PC-3 (cell line): ENCODE measurements at regions of chr2 and their contacts with region 1.

Region 1: GRCh38 chr2:170815746-170816503 is 762 bp upstream of the GAD1 start:
- DNase-seq: peak; percentile 82
- ATAC-seq: peak; percentile 47
- H3K4me3 ChIP-seq: peak overlapping the region; percentile 97
- H3K27ac ChIP-seq: no peak overlapping the region
- H3K4me1 ChIP-seq: peaks cover 13% of the 10 kb centered on the region; the same call in 1 of the 2 replicates
- H3K27me3 ChIP-seq: no peaks in the 10 kb centered on the region
- CTCF ChIP-seq: peak; percentile 89

Region 2: GRCh38 chr2:170369894-170370293 is 446.0 kb before region 1 on chr2:
- CTCF ChIA-PET with region 1: no interaction called
- POLR2A ChIA-PET with region 1: no interaction called
- intact Hi-C with region 1: loop called (anchors 1 kb)
- DNase-seq: peak; percentile 79
- ATAC-seq: 0 out of 2 replicates have a peak, but pooled peaks have one; percentile 32
- H3K4me3 ChIP-seq: no peak overlapping the region
- H3K27ac ChIP-seq: no peak overlapping the region
- H3K4me1 ChIP-seq: peaks cover 18% of the 10 kb centered on the region
- H3K27me3 ChIP-seq: no peaks in the 10 kb centered on the region
- CTCF ChIP-seq: peak; percentile 62

Region 3: GRCh38 chr2:170461884-170462283 is 354.0 kb before region 1 on chr2:
- CTCF ChIA-PET with region 1: no interaction called
- POLR2A ChIA-PET with region 1: no interaction called
- intact Hi-C with region 1: loop called (anchors 5 kb)
- DNase-seq: no peak
- ATAC-seq: no peak
- H3K4me3 ChIP-seq: no peak overlapping the region
- H3K27ac ChIP-seq: no peak overlapping the region
- H3K4me1 ChIP-seq: peaks cover 5% of the 10 kb centered on the region
- H3K27me3 ChIP-seq: no peaks in the 10 kb centered on the region
- CTCF ChIP-seq: peak; percentile 30

Region 4: DNA sequence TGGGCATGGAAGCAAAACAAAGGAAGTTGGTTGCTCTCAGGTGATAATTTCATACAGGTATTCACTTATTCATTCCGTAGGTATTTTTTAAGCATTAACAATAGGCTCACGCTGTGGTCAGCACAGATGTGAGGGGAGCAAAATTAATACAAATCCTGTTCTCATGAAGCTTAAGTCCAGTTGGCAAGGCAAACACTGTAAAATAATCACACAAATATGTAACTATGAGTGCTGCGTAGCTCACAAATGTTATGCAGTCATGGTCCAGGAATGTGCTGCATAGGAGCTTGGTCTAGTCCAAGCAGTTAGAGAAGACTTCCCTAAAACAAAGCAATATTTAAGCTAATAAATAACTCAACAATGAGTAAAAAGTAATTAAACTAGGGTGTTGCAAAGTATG is 76.9 kb before region 1 on chr2:
- CTCF ChIA-PET with region 1: interaction called, 4 read pairs
- POLR2A ChIA-PET with region 1: no interaction called
- intact Hi-C with region 1: loop called (anchors 1 kb)
- DNase-seq: peak; percentile 98
- ATAC-seq: peak; percentile 94
- H3K4me3 ChIP-seq: peak overlapping the region; percentile 50
- H3K27ac ChIP-seq: peak overlapping the region; percentile 87
- H3K4me1 ChIP-seq: peaks cover 28% of the 10 kb centered on the region
- H3K27me3 ChIP-seq: no peaks in the 10 kb centered on the region
- CTCF ChIP-seq: no peak

Region 5: GRCh38 chr2:170770606-170771420 is 45.1 kb before region 1 on chr2:
- CTCF ChIA-PET with region 1: no interaction called
- POLR2A ChIA-PET with region 1: no interaction called
- intact Hi-C with region 1: no loop called
- DNase-seq: peak; percentile 88
- ATAC-seq: peak; percentile 91
- H3K4me3 ChIP-seq: peak overlapping the region; percentile 99
- H3K27ac ChIP-seq: peak overlapping the region; percentile 58
- H3K4me1 ChIP-seq: peaks cover 7% of the 10 kb centered on the region; the same call in 1 of the 2 replicates
- H3K27me3 ChIP-seq: no peaks in the 10 kb centered on the region
- CTCF ChIP-seq: 0 out of 2 replicates have a peak, but pooled peaks have one; percentile 16

Region 6: GRCh38 chr2:170873035-170873692 is 57.2 kb after region 1 on chr2:
- CTCF ChIA-PET with region 1: interaction called, 7 read pairs
- POLR2A ChIA-PET with region 1: interaction called, 7 read pairs
- intact Hi-C with region 1: loop called (anchors 1 kb)
- DNase-seq: peak; percentile 84
- ATAC-seq: peak; percentile 86
- H3K4me3 ChIP-seq: peak overlapping the region; percentile 49; the same call in 1 of the 2 replicates
- H3K27ac ChIP-seq: no peak overlapping the region
- H3K4me1 ChIP-seq: peaks cover 11% of the 10 kb centered on the region
- H3K27me3 ChIP-seq: no peaks in the 10 kb centered on the region
- CTCF ChIP-seq: peak; percentile 94

Region 7: DNA sequence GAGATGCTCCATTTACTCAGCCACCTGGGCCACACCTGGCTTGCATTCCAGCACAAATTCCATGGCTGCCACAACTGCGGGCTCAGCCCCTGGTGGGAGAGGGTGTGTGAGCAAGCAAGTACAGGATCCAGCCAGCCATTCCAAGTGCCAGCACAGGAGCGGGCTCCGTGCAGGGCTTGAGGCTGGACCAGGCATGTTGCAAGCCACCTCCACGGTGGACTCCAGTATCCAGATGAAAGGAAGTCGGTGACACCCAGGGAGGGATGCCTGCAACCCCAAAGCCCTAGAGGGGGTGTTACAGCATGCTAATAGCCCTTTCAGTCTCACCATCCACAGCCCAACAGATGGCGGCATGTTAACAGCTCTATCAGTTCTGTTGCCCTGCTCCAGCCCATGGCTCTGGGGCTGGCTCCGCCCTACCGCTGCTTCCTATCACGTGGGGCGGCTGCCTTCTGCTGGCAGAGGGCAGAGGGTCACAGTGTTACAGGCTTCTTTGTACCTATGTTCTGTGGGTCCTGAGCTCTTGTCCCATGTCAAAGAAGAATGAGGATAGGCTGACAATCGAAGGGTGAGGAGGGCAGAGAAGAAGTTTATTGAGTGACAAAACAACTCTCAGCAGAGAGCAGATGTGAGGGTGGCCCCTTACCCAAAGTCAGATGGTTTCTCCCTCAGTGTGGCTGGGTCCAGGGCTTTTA is 101.4 kb after region 1 on chr2:
- CTCF ChIA-PET with region 1: no interaction called
- POLR2A ChIA-PET with region 1: no interaction called
- intact Hi-C with region 1: no loop called
- DNase-seq: no peak
- ATAC-seq: no peak
- H3K4me3 ChIP-seq: no peak overlapping the region
- H3K27ac ChIP-seq: no peak overlapping the region
- H3K4me1 ChIP-seq: no peaks in the 10 kb centered on the region
- H3K27me3 ChIP-seq: no peaks in the 10 kb centered on the region
- CTCF ChIP-seq: no peak